GM23248 (cell line): ENCODE measurements at regions of chr17 and their contacts with region 1.

Region 1: DNA sequence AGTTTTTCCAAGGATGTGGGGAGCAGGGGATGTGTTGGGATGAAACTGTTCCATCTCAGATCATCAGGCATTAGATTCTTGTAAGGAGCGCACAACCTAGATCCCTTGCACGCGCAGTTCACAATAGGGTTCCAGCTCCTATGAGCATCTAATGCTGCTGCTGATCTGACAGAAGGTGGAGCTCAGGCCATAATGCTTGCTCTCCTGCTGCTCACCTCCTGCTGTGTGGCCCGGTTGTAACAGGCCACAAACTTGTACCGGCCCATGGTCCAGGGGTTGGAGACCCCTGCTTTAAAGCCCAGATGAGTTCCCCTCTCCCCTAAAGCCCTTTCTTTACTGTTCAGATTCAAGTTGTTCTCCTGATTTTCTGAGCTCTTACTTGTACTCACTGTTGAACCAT is 44.8 kb downstream of the RNF135 start:
- DNase-seq: no peak
- H3K4me3 ChIP-seq: no peak overlapping the region
- H3K27ac ChIP-seq: no peak overlapping the region
- H3K4me1 ChIP-seq: peaks cover 14% of the 10 kb centered on the region
- H3K27me3 ChIP-seq: no peaks in the 10 kb centered on the region

Region 2: GRCh38 chr17:31156326-31156725 is 140.7 kb after region 1 on chr17:
- in situ Hi-C with region 1: no loop called
- DNase-seq: peak; percentile 68
- H3K4me3 ChIP-seq: no peak overlapping the region
- H3K27ac ChIP-seq: peak overlapping the region; percentile 46
- H3K4me1 ChIP-seq: peaks cover 29% of the 10 kb centered on the region
- H3K27me3 ChIP-seq: no peaks in the 10 kb centered on the region

Region 3: DNA sequence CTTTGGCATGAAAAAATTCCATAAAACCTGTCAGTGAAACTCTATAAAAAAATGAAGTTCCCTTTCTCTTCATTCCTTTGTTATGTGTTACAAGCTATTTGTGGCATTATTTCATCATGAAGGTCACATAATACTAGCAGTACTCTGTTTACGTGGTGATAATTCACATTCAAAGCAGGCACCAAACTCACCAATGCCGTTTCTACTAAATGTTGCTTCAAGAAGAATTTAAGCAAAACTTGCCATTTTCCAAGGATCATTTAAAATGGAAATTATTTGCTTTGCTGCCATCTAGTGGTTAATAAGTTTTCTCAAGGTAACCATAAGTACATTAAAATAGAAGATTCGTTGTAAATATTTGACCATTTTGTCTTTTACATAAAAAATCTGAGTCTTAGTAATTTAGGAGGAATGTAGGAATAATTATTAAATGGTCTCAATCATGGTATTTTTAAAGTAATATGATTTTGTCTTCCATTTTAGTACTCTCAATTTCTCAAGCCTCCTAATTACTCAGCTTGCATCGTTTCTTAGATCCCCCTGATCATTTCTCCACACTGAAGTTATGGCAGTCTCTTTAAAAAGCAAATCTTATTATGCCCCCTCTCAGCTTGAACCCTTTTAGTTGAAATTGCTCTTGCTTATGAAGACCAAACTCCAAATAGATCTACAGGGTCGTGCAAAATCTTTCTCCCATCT is 200.6 kb after region 1 on chr17:
- in situ Hi-C with region 1: loop called (anchors 10 kb)
- DNase-seq: peak; percentile 87
- H3K4me3 ChIP-seq: peak overlapping the region; percentile 37
- H3K27ac ChIP-seq: peak overlapping the region; percentile 47
- H3K4me1 ChIP-seq: peaks cover 22% of the 10 kb centered on the region
- H3K27me3 ChIP-seq: no peaks in the 10 kb centered on the region